ENCODE measurements at regions of chr6 and their contacts with region 1.

Region 1: GRCh38 chr6:84422380-84422968 is 195.0 kb upstream of the CEP162 start:
- DNase-seq: no peak
- ATAC-seq: peak; percentile 98
- H3K4me3 ChIP-seq: no peak overlapping the region
- H3K27ac ChIP-seq: no peak overlapping the region
- H3K4me1 ChIP-seq: no peaks in the 10 kb centered on the region
- H3K27me3 ChIP-seq: 0 out of 4 replicates have a peak, but pooled peaks cover 0 to 4% of the 10 kb centered on the region in 2 experiments
- CTCF ChIP-seq: peak; percentile 68 to 82 (median 76)
- EP300 ChIP-seq: no peak
- POLR2A ChIP-seq: no peak
- RAD21 ChIP-seq: peak; percentile 50

Region 2: GRCh38 chr6:84263557-84263956 is 158.9 kb before region 1 on chr6:
- CTCF ChIA-PET with region 1: no interaction called
- POLR2A ChIA-PET with region 1: no interaction called
- RAD21 ChIA-PET with region 1: no interaction called
- SMC1A ChIA-PET with region 1: no interaction called
- in situ Hi-C with region 1: no loop called
- intact Hi-C with region 1: no loop called
- DNase-seq: no peak
- ATAC-seq: no peak
- H3K4me3 ChIP-seq: no peak overlapping the region
- H3K27ac ChIP-seq: no peak overlapping the region
- H3K4me1 ChIP-seq: no peaks in the 10 kb centered on the region
- H3K27me3 ChIP-seq: peaks cover 0 to 3% of the 10 kb centered on the region in 2 experiments; a peak in 2 of 4 replicates
- CTCF ChIP-seq: no peak
- EP300 ChIP-seq: no peak
- POLR2A ChIP-seq: no peak
- RAD21 ChIP-seq: no peak

Region 3: GRCh38 chr6:84284428-84285049 is 137.9 kb before region 1 on chr6:
- CTCF ChIA-PET with region 1: interaction called, 49 read pairs
- POLR2A ChIA-PET with region 1: no interaction called
- RAD21 ChIA-PET with region 1: interaction called, 16 read pairs
- SMC1A ChIA-PET with region 1: interaction called, 50 read pairs
- in situ Hi-C with region 1: no loop called
- intact Hi-C with region 1: loop called (anchors 5 kb)
- DNase-seq: no peak
- ATAC-seq: peak; percentile 88
- H3K4me3 ChIP-seq: no peak overlapping the region
- H3K27ac ChIP-seq: no peak overlapping the region
- H3K4me1 ChIP-seq: no peaks in the 10 kb centered on the region
- H3K27me3 ChIP-seq: no peaks in the 10 kb centered on the region
- CTCF ChIP-seq: peak; percentile 55 to 63 (median 62)
- EP300 ChIP-seq: no peak
- POLR2A ChIP-seq: no peak
- RAD21 ChIP-seq: peak; percentile 80

Region 4: DNA sequence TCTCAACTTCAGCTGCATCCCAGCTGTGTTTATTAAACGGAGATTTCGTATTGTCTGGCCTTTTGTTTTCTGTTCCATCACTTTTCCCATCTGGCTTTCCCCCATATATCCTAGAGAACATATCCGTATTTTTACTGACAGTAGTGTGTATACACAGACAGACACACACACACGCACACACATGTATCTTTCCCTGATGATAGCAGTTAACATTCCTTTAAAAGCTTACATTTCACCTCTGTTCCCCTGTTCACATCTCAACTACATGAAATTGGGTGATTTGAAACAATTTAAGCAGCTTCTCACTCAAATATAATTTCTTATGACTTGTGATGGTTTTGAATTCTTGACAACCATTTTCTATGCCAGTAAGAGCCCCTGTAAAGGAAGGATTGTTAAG is 12.1 kb after region 1 on chr6:
- CTCF ChIA-PET with region 1: interaction called, 13 read pairs
- POLR2A ChIA-PET with region 1: no interaction called
- RAD21 ChIA-PET with region 1: interaction called, 6 read pairs
- SMC1A ChIA-PET with region 1: interaction called, 9 read pairs
- in situ Hi-C with region 1: no loop called
- intact Hi-C with region 1: no loop called
- DNase-seq: no peak
- ATAC-seq: no peak
- H3K4me3 ChIP-seq: no peak overlapping the region
- H3K27ac ChIP-seq: no peak overlapping the region
- H3K4me1 ChIP-seq: no peaks in the 10 kb centered on the region
- H3K27me3 ChIP-seq: no peaks in the 10 kb centered on the region
- CTCF ChIP-seq: no peak
- EP300 ChIP-seq: no peak
- POLR2A ChIP-seq: no peak
- RAD21 ChIP-seq: no peak

Region 5: DNA sequence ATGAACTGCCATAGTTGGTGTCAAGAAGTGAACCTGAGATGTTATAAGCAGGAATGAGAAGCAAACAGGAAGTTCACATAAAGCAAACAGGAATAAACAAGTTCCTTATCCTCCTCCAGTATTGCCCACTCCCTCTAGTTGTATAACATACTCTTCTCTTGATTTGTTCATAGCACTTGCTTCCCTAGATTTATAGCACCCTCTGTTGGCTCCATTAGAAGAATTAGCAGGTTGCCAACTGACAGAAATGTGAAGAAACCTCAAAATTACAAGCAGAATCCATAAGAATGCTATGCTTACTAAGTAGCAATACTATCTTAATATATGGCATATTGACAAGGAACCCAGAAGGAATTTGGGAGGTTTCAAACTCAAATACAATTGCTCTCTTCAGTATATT is 146.5 kb after region 1 on chr6:
- CTCF ChIA-PET with region 1: interaction called, 55 read pairs
- POLR2A ChIA-PET with region 1: no interaction called
- RAD21 ChIA-PET with region 1: interaction called, 27 read pairs
- SMC1A ChIA-PET with region 1: interaction called, 37 read pairs
- in situ Hi-C with region 1: no loop called
- intact Hi-C with region 1: no loop called
- DNase-seq: no peak
- ATAC-seq: peak; percentile 58; the same call in 2 of the 3 replicates
- H3K4me3 ChIP-seq: no peak overlapping the region
- H3K27ac ChIP-seq: no peak overlapping the region
- H3K4me1 ChIP-seq: no peaks in the 10 kb centered on the region
- H3K27me3 ChIP-seq: no peaks in the 10 kb centered on the region
- CTCF ChIP-seq: peak in 2 of 3 experiments; percentile 10 to 41; a peak in 2 of 6 replicates
- EP300 ChIP-seq: no peak
- POLR2A ChIP-seq: no peak
- RAD21 ChIP-seq: peak; percentile 51

Region 6: GRCh38 chr6:84774157-84774984 is 351.9 kb after region 1 on chr6:
- CTCF ChIA-PET with region 1: interaction called, 16 read pairs
- POLR2A ChIA-PET with region 1: no interaction called
- RAD21 ChIA-PET with region 1: interaction called, 11 read pairs
- SMC1A ChIA-PET with region 1: interaction called, 9 read pairs
- in situ Hi-C with region 1: no loop called
- intact Hi-C with region 1: no loop called
- DNase-seq: no peak
- ATAC-seq: peak; percentile 90
- H3K4me3 ChIP-seq: no peak overlapping the region
- H3K27ac ChIP-seq: no peak overlapping the region
- H3K4me1 ChIP-seq: no peaks in the 10 kb centered on the region
- H3K27me3 ChIP-seq: peaks cover 2 to 4% of the 10 kb centered on the region in 2 experiments
- CTCF ChIP-seq: peak; percentile 17 to 44 (median 39); a peak in 4 of 6 replicates
- EP300 ChIP-seq: no peak
- POLR2A ChIP-seq: no peak
- RAD21 ChIP-seq: no peak

Region 7: DNA sequence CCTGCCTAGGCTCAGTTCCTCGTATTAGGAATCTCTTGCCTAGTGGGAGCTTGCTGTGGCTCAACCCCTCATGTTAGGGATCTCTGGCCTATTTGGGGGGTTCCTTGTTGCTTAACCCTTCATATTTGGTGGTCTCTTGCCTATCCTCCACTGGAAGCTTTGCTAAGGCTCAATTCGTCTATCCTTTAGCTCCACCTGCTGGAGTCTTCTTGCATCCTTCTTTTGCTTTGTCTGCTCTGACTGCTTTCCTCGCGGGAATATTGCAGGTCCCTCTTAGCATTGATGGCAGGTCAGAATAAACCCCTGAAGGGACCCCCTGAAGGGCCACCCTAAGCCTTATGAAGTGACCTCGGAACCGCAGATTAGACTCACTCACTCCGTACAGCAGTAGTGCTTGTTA is 544.9 kb after region 1 on chr6:
- CTCF ChIA-PET with region 1: interaction called, 13 read pairs
- POLR2A ChIA-PET with region 1: no interaction called
- RAD21 ChIA-PET with region 1: interaction called, 6 read pairs
- SMC1A ChIA-PET with region 1: interaction called, 10 read pairs
- in situ Hi-C with region 1: no loop called
- intact Hi-C with region 1: loop called (anchors 2 kb)
- DNase-seq: no peak
- ATAC-seq: peak; percentile 42; the same call in 1 of the 3 replicates
- H3K4me3 ChIP-seq: no peak overlapping the region
- H3K27ac ChIP-seq: no peak overlapping the region
- H3K4me1 ChIP-seq: no peaks in the 10 kb centered on the region
- H3K27me3 ChIP-seq: no peaks in the 10 kb centered on the region
- CTCF ChIP-seq: peak; percentile 27 to 41 (median 35); a peak in 4 of 6 replicates
- EP300 ChIP-seq: no peak
- POLR2A ChIP-seq: no peak
- RAD21 ChIP-seq: peak; percentile 56

Region 8: DNA sequence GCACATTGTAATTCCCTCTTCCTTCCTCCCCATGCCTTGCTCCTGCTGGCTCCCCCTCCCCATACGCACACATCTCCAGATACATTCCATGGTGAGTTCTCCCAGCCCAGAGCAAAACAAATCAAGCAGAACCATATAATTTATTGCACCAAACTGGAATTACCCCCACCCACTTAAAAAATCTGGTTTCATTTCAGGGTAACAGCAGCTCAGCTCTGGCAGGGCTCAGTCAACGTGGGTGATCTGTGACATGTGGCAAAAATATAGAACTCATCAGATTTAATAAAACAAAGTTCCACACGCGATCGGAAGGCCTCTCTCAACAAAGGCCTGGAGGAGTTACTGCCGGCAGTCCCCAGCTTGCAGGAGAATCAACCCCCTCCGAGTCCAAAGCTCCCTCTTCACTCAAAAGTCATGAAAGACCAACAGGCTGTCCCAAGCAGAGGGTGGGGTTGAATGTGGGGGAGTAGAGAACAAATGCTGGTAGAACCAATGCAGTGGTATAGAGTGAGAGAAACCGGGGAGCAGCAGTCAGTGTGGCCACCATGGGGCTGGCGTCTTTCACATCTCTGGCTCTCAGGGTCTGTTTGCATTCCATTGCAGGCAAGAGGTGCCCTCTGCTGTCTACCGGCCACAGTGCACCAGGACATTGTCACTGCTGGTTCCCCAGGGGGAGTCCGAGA is 704.2 kb after region 1 on chr6:
- CTCF ChIA-PET with region 1: interaction called, 24 read pairs
- POLR2A ChIA-PET with region 1: no interaction called
- RAD21 ChIA-PET with region 1: interaction called, 7 read pairs
- SMC1A ChIA-PET with region 1: interaction called, 8 read pairs
- in situ Hi-C with region 1: loop called (anchors 10 kb)
- intact Hi-C with region 1: no loop called
- DNase-seq: no peak
- ATAC-seq: peak; percentile 97
- H3K4me3 ChIP-seq: no peak overlapping the region
- H3K27ac ChIP-seq: no peak overlapping the region
- H3K4me1 ChIP-seq: no peaks in the 10 kb centered on the region
- H3K27me3 ChIP-seq: no peaks in the 10 kb centered on the region
- CTCF ChIP-seq: peak; percentile 51 to 70 (median 51); a peak in 5 of 6 replicates
- EP300 ChIP-seq: no peak
- POLR2A ChIP-seq: no peak
- RAD21 ChIP-seq: peak; percentile 59